Dendritic cell treated with granulocyte-macrophage colony-stimulating factor and Interleukin-4, amounts not matched to agents 40 ng/mL and 50 ng/mL, for 4 days (primary cell): ENCODE measurements at regions of chr6 and their contacts with region 1.

Region 1: GRCh38 chr6:134502614-134503549 is 185.0 kb upstream of the SGK1 start:
- H3K4me3 Mint-ChIP-seq: no peak overlapping the region
- H3K27ac Mint-ChIP-seq: peak overlapping the region; percentile 5
- H3K4me1 Mint-ChIP-seq: peaks cover 12% of the 10 kb centered on the region
- H3K27me3 Mint-ChIP-seq: peaks cover 4% of the 10 kb centered on the region

Region 2: GRCh38 chr6:134564705-134565104 is 61.8 kb after region 1 on chr6:
- intact Hi-C with region 1: loop called (anchors 5 kb)
- H3K4me3 Mint-ChIP-seq: no peak overlapping the region
- H3K27ac Mint-ChIP-seq: no peak overlapping the region
- H3K4me1 Mint-ChIP-seq: peaks cover 3% of the 10 kb centered on the region
- H3K27me3 Mint-ChIP-seq: no peaks in the 10 kb centered on the region